PC-3 (cell line): ENCODE measurements at regions of chr17 and their contacts with region 1.

Region 1: DNA sequence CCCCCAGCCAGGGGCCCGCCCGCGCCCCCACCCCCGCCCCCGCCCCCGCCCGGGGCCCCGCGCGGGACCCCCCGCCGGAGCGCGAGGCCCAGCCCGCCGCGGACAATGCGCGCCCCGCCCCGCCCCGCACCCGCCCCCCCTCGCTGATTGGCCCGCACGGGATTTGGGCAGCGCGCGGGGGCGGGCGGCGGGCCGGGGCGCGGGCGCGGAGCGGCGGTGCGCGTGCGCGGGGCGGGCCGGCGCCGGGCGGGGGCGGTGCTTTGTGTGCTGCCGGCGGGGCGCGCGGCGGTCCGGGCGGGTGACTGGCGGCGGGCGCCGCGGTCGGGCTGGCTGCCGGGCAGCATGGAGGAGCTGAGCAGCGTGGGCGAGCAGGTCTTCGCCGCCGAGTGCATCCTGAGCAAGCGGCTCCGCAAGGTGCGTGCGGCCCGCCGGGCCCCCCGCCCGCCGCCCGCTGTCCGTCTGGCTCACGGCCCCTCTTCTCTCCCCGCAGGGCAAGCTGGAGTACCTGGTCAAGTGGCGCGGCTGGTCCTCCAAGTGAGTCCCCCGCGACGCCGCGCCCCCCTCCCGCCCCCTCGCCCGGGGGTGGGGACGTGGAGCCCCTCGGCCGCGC is at the start of gene CBX2:
- DNase-seq: peak; percentile 78
- ATAC-seq: peak; percentile 67
- H3K4me3 ChIP-seq: peak within 1 kb of the TSS; percentile 92
- H3K27ac ChIP-seq: peak within 1 kb of the TSS; percentile 17; the same call in 1 of the 2 replicates
- H3K4me1 ChIP-seq: peaks cover 33% of the 10 kb centered on the region
- H3K27me3 ChIP-seq: no peaks in the 10 kb centered on the region
- CTCF ChIP-seq: no peak
- total RNA-seq, gene CBX2: 39.2 and 43.9 TPM in 2 replicates

Region 2: GRCh38 chr17:79752175-79752574 is 25.8 kb before region 1 on chr17:
- CTCF ChIA-PET with region 1: interaction called, 3 read pairs
- POLR2A ChIA-PET with region 1: no interaction called
- intact Hi-C with region 1: loop called (anchors 1 kb)
- DNase-seq: peak; percentile 27
- ATAC-seq: no peak
- H3K4me3 ChIP-seq: no peak overlapping the region
- H3K27ac ChIP-seq: peak overlapping the region; percentile 28
- H3K4me1 ChIP-seq: peaks cover 33% of the 10 kb centered on the region
- H3K27me3 ChIP-seq: 0 out of 2 replicates have a peak, but pooled peaks cover 3% of the 10 kb centered on the region
- CTCF ChIP-seq: no peak